Heart left ventricle (tissue), 16 donors: ENCODE measurements at regions of chr6 and their contacts with region 1.

Region 1: GRCh38 chr6:31135710-31136109 is 3.2 kb downstream of the PSORS1C2 start:
- DNase-seq: no peak
- ATAC-seq: no peak
- H3K4me3 ChIP-seq: no peak overlapping the region
- H3K27ac ChIP-seq: no peak overlapping the region
- H3K4me1 ChIP-seq: peaks cover 0 to 15% (median 9%) of the 10 kb centered on the region in 12 donors
- H3K27me3 ChIP-seq: no peaks in the 10 kb centered on the region
- CTCF ChIP-seq: no peak
- POLR2A ChIP-seq: no peak

Region 2: GRCh38 chr6:31037682-31038081 is 98.0 kb before region 1 on chr6:
- intact Hi-C with region 1: no loop called
- DNase-seq: no peak
- ATAC-seq: no peak
- H3K4me3 ChIP-seq: no peak overlapping the region
- H3K27ac ChIP-seq: no peak overlapping the region
- H3K4me1 ChIP-seq: peaks cover 0 to 8% (median 0%) of the 10 kb centered on the region in 12 donors
- H3K27me3 ChIP-seq: no peaks in the 10 kb centered on the region
- CTCF ChIP-seq: no peak
- POLR2A ChIP-seq: no peak

Region 3: GRCh38 chr6:31366693-31367470 is 231.2 kb after region 1 on chr6:
- intact Hi-C with region 1: loop called (anchors 1 to 5 kb)
- DNase-seq: peak; percentile 84 to 93 (median 86)
- ATAC-seq: peak; percentile 95 to 100 (median 100)
- H3K4me3 ChIP-seq: peak overlapping the region in 9 of 12 donors; percentile 34 to 52 (median 47)
- H3K27ac ChIP-seq: no peak overlapping the region
- H3K4me1 ChIP-seq: peaks cover 0 to 8% (median 4%) of the 10 kb centered on the region in 12 donors
- H3K27me3 ChIP-seq: peaks cover 0 to 42% (median 0%) of the 10 kb centered on the region in 9 donors
- CTCF ChIP-seq: peak; percentile 80 to 97 (median 92)
- POLR2A ChIP-seq: no peak